HEK293T (cell line): ENCODE measurements at regions of chr6 and their contacts with region 1.

Region 1: DNA sequence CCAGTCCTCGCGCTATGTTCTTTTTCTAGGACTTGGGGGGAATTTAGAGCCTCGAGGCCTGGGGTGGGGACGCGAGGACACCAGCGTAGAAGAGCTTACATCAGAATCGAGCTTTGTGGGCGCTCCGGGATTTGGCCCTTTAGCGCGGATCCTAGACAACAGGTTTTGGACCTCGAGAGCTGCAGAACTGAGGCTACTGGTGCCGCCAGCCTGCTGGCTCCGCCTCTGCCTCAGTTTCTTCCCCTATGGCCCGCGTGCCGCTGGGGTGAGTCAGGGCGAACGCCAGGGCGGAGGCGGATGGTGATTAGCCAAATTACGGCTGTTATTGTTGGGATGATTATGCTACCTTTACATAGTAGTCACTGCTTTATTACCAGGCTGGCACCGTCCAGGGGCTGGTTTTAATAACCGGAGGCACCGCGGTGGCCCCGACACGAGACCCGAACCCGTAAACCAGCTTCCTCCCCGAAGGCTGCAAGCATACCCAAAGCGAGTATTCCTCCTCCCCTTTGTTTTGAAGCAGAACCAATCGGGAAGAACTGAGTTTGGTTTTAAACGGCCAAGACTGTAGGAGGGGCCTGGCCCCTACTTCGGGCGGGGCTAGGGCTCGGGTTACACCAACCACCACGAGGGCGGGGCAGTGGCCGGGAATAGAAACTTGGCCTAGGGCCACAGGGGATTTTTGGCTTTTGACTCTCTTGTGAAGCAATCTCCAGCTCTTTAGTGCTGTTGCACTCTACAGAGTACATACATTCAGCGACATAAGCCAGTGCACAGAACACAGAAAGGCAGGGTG is 639 bp upstream of the GTPBP2 start:
- DNase-seq: peak; percentile 92

Region 2: DNA sequence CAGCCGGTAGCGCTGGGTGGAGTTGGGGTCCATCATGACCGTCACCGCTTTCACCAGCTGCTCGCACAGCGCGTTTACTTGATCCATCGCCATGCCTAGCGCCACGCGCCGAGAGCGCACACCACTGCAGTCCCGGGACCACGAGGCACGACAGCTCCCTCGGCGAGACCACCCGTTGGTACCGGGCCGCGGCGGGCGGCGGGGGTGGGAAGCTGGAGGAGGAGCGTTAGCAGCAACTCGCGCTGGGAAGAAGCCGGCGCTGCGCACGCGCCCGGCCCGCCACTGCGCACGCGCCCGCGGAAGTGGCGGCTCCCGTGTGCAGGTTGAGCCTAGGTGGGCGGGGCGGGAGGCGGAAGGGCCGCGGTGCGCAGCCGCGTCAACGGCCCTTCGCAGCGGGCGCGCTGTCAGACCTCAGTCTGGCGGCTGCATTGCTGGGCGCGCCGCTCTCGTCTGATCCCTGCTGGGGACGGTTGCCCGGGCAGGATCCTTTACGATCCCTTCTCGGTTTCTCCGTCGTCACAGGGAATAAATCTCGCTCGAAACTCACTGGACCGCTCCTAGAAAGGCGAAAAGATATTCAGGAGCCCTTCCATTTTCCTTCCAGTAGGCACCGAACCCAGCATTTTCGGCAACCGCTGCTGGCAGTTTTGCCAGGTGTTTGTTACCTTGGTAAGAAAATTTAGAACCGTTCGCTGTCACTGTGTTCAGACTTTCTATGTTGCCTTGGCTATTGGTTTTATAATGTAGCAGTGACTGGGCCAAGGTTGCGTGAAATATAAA is 53.7 kb before region 1 on chr6 and contains the starts of genes POLH and XPO5:
- CTCF ChIA-PET with region 1: no interaction called
- POLR2A ChIA-PET with region 1: interaction called, 15 read pairs
- DNase-seq: peak; percentile 98

Region 3: DNA sequence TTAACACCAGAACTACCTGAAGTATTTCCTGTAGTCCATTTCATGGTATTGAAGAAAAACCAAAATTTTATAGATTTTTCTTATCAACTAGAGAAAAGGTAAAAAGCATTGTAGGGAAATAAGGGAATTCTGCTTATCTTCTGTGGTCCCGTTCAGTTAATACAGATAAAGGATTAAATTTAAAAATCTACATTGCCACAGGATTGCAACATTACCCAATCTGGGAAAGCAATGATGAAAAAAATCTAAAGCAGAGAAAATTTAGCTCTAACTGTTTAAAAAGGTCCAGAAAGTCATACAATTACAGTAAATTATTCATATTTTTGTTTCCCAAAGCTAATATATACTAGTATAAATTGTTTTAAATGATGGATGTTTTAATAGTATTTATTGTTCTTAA is 35.8 kb before region 1 on chr6:
- CTCF ChIA-PET with region 1: no interaction called
- POLR2A ChIA-PET with region 1: interaction called, 11 read pairs
- DNase-seq: no peak

Region 4: GRCh38 chr6:43616725-43617472 is 12.8 kb before region 1 on chr6:
- CTCF ChIA-PET with region 1: no interaction called
- POLR2A ChIA-PET with region 1: interaction called, 32 read pairs
- DNase-seq: no peak

Region 5: DNA sequence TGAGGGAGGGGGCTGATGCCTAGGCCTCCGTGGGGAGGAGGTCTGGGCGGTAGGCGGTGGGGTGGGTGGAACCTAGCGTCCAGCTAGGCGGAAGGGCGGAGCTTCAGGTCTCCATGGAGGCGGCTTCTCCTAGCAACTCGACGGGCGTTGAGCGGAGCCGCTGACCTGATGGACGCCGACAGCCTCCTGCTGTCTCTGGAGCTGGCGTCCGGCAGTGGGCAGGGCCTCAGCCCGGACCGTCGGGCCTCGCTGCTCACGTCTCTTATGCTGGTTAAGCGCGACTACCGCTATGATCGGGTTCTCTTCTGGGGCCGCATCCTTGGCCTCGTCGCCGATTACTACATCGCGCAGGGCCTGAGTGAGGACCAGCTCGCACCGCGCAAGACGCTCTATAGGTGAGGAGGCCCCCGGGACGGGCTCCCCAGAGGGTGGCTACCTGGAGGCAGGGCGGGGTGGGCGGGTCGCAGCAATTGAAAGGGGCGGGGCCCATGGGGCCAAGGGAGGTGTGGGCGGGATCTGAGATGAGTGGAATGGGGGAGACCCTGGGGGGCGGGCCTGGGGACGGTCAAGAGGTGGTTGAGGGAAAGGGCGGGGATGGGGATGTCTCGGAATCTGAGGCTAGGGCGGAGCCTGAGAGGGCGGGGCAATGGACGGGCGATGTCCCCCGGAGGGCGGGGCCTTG is 15.4 kb after region 1 on chr6 and contains the start of gene RSPH9:
- CTCF ChIA-PET with region 1: no interaction called
- POLR2A ChIA-PET with region 1: interaction called, 44 read pairs
- DNase-seq: no peak

Region 6: GRCh38 chr6:43667245-43668150 is 37.8 kb after region 1 on chr6:
- CTCF ChIA-PET with region 1: interaction called, 3 read pairs
- POLR2A ChIA-PET with region 1: interaction called, 13 read pairs
- DNase-seq: peak; percentile 86

Region 7: GRCh38 chr6:43769526-43770416 is 140.1 kb after region 1 on chr6 and contains the start of gene VEGFA:
- CTCF ChIA-PET with region 1: no interaction called
- POLR2A ChIA-PET with region 1: interaction called, 10 read pairs
- DNase-seq: peak; percentile 90